ENCODE measurements at regions of chr7 and their contacts with region 1.

Region 1: DNA sequence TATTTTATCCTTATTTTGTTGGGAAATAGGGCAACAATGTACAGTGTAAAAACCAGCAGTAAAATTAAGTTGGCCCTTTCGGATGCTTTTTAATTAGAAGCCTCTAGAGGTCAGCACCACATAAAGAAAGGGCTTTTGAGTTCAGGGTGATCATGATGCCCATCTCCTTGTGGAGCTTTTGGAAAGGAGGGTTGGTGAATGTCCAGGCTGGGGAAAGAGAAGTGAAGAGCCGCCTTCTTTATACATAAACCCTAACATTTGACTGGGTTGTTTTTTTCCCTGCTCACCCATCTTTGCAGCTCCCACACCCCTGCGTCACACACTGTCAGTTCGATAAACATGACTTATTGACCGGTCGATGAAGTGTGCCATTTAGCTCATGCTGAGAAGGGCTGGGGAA is 29.8 kb downstream of the MTURN start:
- DNase-seq: no peak
- ATAC-seq: peak; percentile 49
- H3K4me3 Mint-ChIP-seq: no peak overlapping the region
- H3K27ac Mint-ChIP-seq: peak overlapping the region; percentile 38
- H3K4me1 Mint-ChIP-seq: peaks cover 39% of the 10 kb centered on the region
- H3K27me3 Mint-ChIP-seq: no peaks in the 10 kb centered on the region
- CTCF ChIP-seq: no peak

Region 2: GRCh38 chr7:30148951-30149471 is 15.6 kb before region 1 on chr7:
- CTCF ChIA-PET with region 1: no interaction called
- POLR2A ChIA-PET with region 1: no interaction called
- intact Hi-C with region 1: no loop called
- DNase-seq: peak; percentile 27
- ATAC-seq: peak; percentile 82
- H3K4me3 Mint-ChIP-seq: peak overlapping the region; percentile 72
- H3K27ac Mint-ChIP-seq: peak overlapping the region; percentile 72
- H3K4me1 Mint-ChIP-seq: no peaks in the 10 kb centered on the region
- H3K27me3 Mint-ChIP-seq: no peaks in the 10 kb centered on the region
- CTCF ChIP-seq: no peak

Region 3: DNA sequence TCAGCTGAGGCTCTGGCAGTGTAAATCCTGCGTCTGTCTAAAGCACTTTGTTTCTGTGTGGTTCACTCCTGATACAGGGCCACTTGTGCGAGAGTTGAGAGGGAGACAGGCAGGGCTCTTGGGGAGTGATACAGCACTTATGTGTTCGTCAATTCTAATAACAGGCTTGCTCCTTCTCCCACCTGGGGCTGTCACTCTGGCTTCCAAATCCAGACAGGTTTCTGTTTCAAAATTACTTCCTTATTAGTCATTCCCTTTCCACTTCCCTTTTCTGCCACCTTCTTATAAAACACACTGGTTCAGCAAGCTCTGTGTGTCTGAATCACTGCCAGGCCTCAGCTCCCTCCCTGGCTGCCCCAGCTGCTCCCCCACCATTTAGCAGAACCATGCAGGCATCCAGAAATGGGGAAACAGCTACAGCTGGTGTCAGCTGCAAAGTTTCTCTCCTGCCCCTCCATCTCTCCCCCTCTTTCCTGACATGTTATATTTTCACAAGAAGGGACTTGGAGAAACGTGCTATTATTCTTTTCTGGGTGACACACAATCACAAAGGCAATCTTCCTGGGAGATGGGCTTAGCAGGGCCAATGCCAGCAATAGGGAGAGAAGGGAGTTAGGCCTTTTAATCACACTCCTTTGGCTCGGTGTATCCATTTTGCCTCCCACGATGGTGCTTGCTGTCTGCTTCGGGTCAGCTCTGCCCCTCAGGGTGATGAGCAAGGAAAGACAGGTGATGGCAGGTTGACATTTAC is 61.5 kb after region 1 on chr7:
- CTCF ChIA-PET with region 1: no interaction called
- POLR2A ChIA-PET with region 1: interaction called, 3 read pairs
- intact Hi-C with region 1: loop called (anchors 1 kb)
- DNase-seq: peak; percentile 41
- ATAC-seq: peak; percentile 98
- H3K4me3 Mint-ChIP-seq: peak overlapping the region; percentile 39
- H3K27ac Mint-ChIP-seq: peak overlapping the region; percentile 92
- H3K4me1 Mint-ChIP-seq: peaks cover 28% of the 10 kb centered on the region
- H3K27me3 Mint-ChIP-seq: no peaks in the 10 kb centered on the region
- CTCF ChIP-seq: no peak

Region 4: DNA sequence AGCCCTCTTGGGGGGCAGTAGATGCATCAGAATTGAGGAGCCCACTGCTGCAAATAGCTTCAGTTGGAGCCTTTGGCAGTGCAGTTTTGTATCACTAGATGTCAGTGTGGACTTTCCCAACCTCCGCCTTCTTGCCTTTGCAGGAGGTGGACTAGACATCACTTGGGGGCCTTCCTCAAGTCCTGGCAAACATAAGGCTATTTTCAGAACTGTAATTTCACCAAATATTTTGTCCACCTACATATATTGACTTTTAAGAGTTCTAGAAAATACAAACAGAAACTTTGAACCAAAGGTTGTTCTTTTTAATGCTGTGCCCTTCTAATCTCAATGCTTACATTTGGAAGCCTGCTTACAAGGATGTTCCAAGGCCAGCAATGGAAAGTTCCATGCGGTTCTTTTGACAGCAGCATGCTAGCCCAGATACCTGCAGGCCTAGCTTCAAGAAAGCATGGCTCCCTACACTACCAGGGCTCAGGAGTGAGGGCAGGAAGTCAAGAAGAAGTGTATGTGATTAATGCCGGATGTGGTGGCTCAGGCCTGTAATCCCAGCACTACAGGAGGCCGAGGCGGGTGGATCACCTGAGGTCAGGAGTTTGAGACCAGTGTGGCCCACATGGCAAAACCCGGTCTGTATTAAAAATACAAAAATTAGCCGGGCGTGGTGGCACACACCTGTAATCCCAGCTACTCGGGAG is 111.8 kb after region 1 on chr7:
- CTCF ChIA-PET with region 1: interaction called, 37 read pairs
- POLR2A ChIA-PET with region 1: no interaction called
- intact Hi-C with region 1: loop called (anchors 1 kb)
- DNase-seq: no peak
- ATAC-seq: peak; percentile 78
- H3K4me3 Mint-ChIP-seq: no peak overlapping the region
- H3K27ac Mint-ChIP-seq: no peak overlapping the region
- H3K4me1 Mint-ChIP-seq: peaks cover 16% of the 10 kb centered on the region
- H3K27me3 Mint-ChIP-seq: no peaks in the 10 kb centered on the region
- CTCF ChIP-seq: no peak

Region 5: GRCh38 chr7:30445770-30446169 is 281.2 kb after region 1 on chr7:
- CTCF ChIA-PET with region 1: interaction called, 5 read pairs
- POLR2A ChIA-PET with region 1: no interaction called
- intact Hi-C with region 1: loop called (anchors 5 kb)
- DNase-seq: peak; percentile 66
- ATAC-seq: peak; percentile 100
- H3K4me3 Mint-ChIP-seq: no peak overlapping the region
- H3K27ac Mint-ChIP-seq: peak overlapping the region; percentile 64
- H3K4me1 Mint-ChIP-seq: peaks cover 6% of the 10 kb centered on the region
- H3K27me3 Mint-ChIP-seq: no peaks in the 10 kb centered on the region
- CTCF ChIP-seq: no peak